ENCODE measurements at regions of chr2 and their contacts with region 1.

Region 1: GRCh38 chr2:24984912-24985311 is 13.2 kb upstream of the DNAJC27 start:
- DNase-seq: no peak
- H3K4me3 ChIP-seq: no peak overlapping the region
- H3K27ac ChIP-seq: peak overlapping the region; percentile 44 to 72 (median 56)
- H3K4me1 ChIP-seq: peaks cover 20 to 34% (median 33%) of the 10 kb centered on the region in 4 donors
- H3K27me3 ChIP-seq: no peaks in the 10 kb centered on the region
- CTCF ChIP-seq: no peak
- EP300 ChIP-seq: no peak
- POLR2A ChIP-seq: no peak

Region 2: GRCh38 chr2:25197336-25198208 is 212.7 kb after region 1 on chr2:
- intact Hi-C with region 1: loop called (anchors 10 kb)
- DNase-seq: no peak
- H3K4me3 ChIP-seq: no peak overlapping the region
- H3K27ac ChIP-seq: no peak overlapping the region
- H3K4me1 ChIP-seq: peaks cover 0 to 10% (median 4%) of the 10 kb centered on the region in 4 donors
- H3K27me3 ChIP-seq: no peaks in the 10 kb centered on the region
- CTCF ChIP-seq: no peak
- EP300 ChIP-seq: no peak
- POLR2A ChIP-seq: no peak